ENCODE measurements at regions of chr9 and their contacts with region 1.

Region 1: GRCh38 chr9:35882263-35882848 is 12.2 kb upstream of the OR13J1 start:
- DNase-seq: peak; percentile 84
- ATAC-seq: peak; percentile 66
- H3K4me3 ChIP-seq: no peak overlapping the region
- H3K4me3 Mint-ChIP-seq: no peak overlapping the region
- H3K27ac ChIP-seq: no peak overlapping the region
- H3K27ac Mint-ChIP-seq: no peak overlapping the region
- H3K4me1 ChIP-seq: no peaks in the 10 kb centered on the region
- H3K4me1 Mint-ChIP-seq: no peaks in the 10 kb centered on the region
- H3K27me3 ChIP-seq: peaks cover 0 to 3% (median 0%) of the 10 kb centered on the region in 4 experiments
- H3K27me3 Mint-ChIP-seq: peaks cover 17% of the 10 kb centered on the region
- CTCF ChIP-seq: peak; percentile 99

Region 2: GRCh38 chr9:35756275-35757225 is 125.8 kb before region 1 on chr9:
- CTCF ChIA-PET with region 1: interaction called, 6 read pairs
- POLR2A ChIA-PET with region 1: no interaction called
- intact Hi-C with region 1: loop called (anchors 1 kb)
- DNase-seq: peak; percentile 84
- ATAC-seq: peak; percentile 80
- H3K4me3 ChIP-seq: peak overlapping the region; percentile 39 to 85 (median 81)
- H3K4me3 Mint-ChIP-seq: peak overlapping the region; percentile 93
- H3K27ac ChIP-seq: peak overlapping the region; percentile 92 to 94
- H3K27ac Mint-ChIP-seq: peak overlapping the region; percentile 97
- H3K4me1 ChIP-seq: peaks cover 34 to 44% of the 10 kb centered on the region in 2 donors
- H3K4me1 Mint-ChIP-seq: peaks cover 65% of the 10 kb centered on the region
- H3K27me3 ChIP-seq: no peaks in the 10 kb centered on the region
- H3K27me3 Mint-ChIP-seq: no peaks in the 10 kb centered on the region
- CTCF ChIP-seq: peak; percentile 70

Region 3: GRCh38 chr9:35820076-35820475 is 62.3 kb before region 1 on chr9:
- CTCF ChIA-PET with region 1: interaction called, 141 read pairs
- POLR2A ChIA-PET with region 1: no interaction called
- intact Hi-C with region 1: no loop called
- DNase-seq: no peak
- ATAC-seq: no peak
- H3K4me3 ChIP-seq: no peak overlapping the region
- H3K4me3 Mint-ChIP-seq: no peak overlapping the region
- H3K27ac ChIP-seq: no peak overlapping the region
- H3K27ac Mint-ChIP-seq: no peak overlapping the region
- H3K4me1 ChIP-seq: no peaks in the 10 kb centered on the region
- H3K4me1 Mint-ChIP-seq: peaks cover 4% of the 10 kb centered on the region
- H3K27me3 ChIP-seq: no peaks in the 10 kb centered on the region
- H3K27me3 Mint-ChIP-seq: no peaks in the 10 kb centered on the region
- CTCF ChIP-seq: no peak

Region 4: DNA sequence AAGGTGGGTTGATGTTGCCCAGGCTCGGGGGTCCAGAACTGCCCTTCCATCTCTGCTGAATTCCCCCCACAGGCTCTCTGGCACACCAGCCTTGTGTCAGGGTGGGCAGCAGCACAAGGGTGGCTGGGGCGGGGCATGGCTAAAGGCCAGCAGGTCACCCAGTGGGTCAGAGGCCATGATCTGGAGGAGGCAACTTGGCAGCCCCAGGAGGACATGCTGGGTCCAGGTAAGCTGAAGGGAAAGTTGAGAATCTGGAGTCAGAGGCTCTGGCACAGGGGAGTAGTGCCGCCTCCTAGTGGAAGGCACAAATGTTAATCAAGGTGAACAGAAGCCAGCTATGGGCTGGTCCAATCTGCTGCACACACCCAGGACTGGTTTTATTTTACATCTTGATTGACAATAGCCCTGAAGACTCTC is 47.1 kb before region 1 on chr9:
- CTCF ChIA-PET with region 1: interaction called, 24 read pairs
- POLR2A ChIA-PET with region 1: no interaction called
- intact Hi-C with region 1: no loop called
- DNase-seq: no peak
- ATAC-seq: no peak
- H3K4me3 ChIP-seq: no peak overlapping the region
- H3K4me3 Mint-ChIP-seq: no peak overlapping the region
- H3K27ac ChIP-seq: no peak overlapping the region
- H3K27ac Mint-ChIP-seq: peak overlapping the region; percentile 6
- H3K4me1 ChIP-seq: peaks cover 28 to 35% of the 10 kb centered on the region in 2 donors
- H3K4me1 Mint-ChIP-seq: peaks cover 44% of the 10 kb centered on the region
- H3K27me3 ChIP-seq: no peaks in the 10 kb centered on the region
- H3K27me3 Mint-ChIP-seq: no peaks in the 10 kb centered on the region
- CTCF ChIP-seq: no peak

Region 5: GRCh38 chr9:35852876-35853865 is 29.2 kb before region 1 on chr9:
- CTCF ChIA-PET with region 1: interaction called, 10 read pairs
- POLR2A ChIA-PET with region 1: no interaction called
- intact Hi-C with region 1: loop called (anchors 5 kb)
- DNase-seq: no peak
- ATAC-seq: no peak
- H3K4me3 ChIP-seq: no peak overlapping the region
- H3K4me3 Mint-ChIP-seq: no peak overlapping the region
- H3K27ac ChIP-seq: no peak overlapping the region
- H3K27ac Mint-ChIP-seq: no peak overlapping the region
- H3K4me1 ChIP-seq: peaks cover 7 to 14% of the 10 kb centered on the region in 2 donors
- H3K4me1 Mint-ChIP-seq: peaks cover 10% of the 10 kb centered on the region
- H3K27me3 ChIP-seq: no peaks in the 10 kb centered on the region
- H3K27me3 Mint-ChIP-seq: no peaks in the 10 kb centered on the region
- CTCF ChIP-seq: no peak